ENCODE measurements at regions of chr16 and their contacts with region 1.

Region 1: GRCh38 chr16:54929090-54930004 is 1.3 kb upstream of the IRX5 start:
- DNase-seq: peak; percentile 99 to 100
- H3K4me3 ChIP-seq: peak overlapping the region; percentile 69 to 80
- H3K27ac ChIP-seq: peak overlapping the region; percentile 94 to 96
- H3K4me1 ChIP-seq: peaks cover 0 to 53% (median 19%) of the 10 kb centered on the region in 4 donors
- H3K27me3 ChIP-seq: no peaks in the 10 kb centered on the region
- CTCF ChIP-seq: no peak

Region 2: GRCh38 chr16:54193665-54194333 is 735.5 kb before region 1 on chr16:
- intact Hi-C with region 1: loop called (anchors 5 kb)
- DNase-seq: peak; percentile 79 to 89
- H3K4me3 ChIP-seq: peak overlapping the region; percentile 42 to 57
- H3K27ac ChIP-seq: peak overlapping the region; percentile 86 to 89
- H3K4me1 ChIP-seq: peaks cover 0 to 18% (median 15%) of the 10 kb centered on the region in 4 donors
- H3K27me3 ChIP-seq: no peaks in the 10 kb centered on the region
- CTCF ChIP-seq: peak; percentile 88 to 90

Region 3: GRCh38 chr16:54286090-54286993 is 643.0 kb before region 1 on chr16 and contains the start of gene IRX3:
- intact Hi-C with region 1: loop called (anchors 5 kb)
- DNase-seq: peak; percentile 87 to 93
- H3K4me3 ChIP-seq: peak within 1 kb of the TSS; percentile 66 to 91
- H3K27ac ChIP-seq: peak within 1 kb of the TSS; percentile 77 to 91
- H3K4me1 ChIP-seq: peaks cover 0 to 48% (median 34%) of the 10 kb centered on the region in 4 donors
- H3K27me3 ChIP-seq: peaks cover 0 to 16% of the 10 kb centered on the region in 2 donors
- CTCF ChIP-seq: no peak

Region 4: GRCh38 chr16:54647725-54648221 is 281.6 kb before region 1 on chr16:
- intact Hi-C with region 1: loop called (anchors 5 kb)
- DNase-seq: no peak
- H3K4me3 ChIP-seq: no peak overlapping the region
- H3K27ac ChIP-seq: peak overlapping the region; percentile 22 to 43
- H3K4me1 ChIP-seq: peaks cover 0 to 68% (median 33%) of the 10 kb centered on the region in 4 donors
- H3K27me3 ChIP-seq: no peaks in the 10 kb centered on the region
- CTCF ChIP-seq: no peak

Region 5: DNA sequence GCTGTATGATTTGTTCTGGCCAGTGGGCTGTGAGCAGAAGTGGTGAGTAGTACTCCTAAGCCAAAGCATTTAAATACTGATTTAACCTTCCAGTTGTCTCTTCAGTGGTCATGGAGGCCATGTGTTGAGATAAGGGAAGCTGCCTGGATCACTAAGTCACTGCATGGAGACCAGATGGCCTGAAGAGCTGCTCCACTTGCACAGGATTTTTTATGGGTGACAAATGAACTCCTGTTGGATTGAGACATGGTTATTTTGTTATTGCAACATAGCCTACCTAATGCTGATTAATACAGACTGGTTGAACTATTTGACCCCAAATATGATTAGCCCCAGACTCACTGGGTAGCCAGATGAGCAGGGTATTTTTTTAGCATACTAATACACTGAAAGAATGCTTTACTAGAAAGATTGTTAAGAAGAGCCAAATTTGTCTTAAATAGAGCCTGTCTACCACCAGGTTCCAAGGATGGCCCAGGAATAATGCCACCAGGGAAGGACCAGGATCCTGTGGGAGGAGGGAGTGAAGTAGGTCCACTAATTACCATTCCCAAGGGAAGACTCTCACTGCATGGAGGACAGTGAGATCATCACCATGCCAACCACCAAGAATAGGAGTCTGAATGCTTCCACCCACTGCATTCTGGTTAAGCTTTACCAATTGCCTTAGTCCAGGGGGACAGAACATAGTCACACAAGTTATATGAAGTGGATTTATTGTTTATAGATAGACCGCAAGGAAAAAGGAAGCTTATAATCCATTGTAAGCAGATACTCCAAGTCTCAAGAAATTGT is 207.2 kb after region 1 on chr16:
- intact Hi-C with region 1: no loop called
- DNase-seq: no peak
- H3K4me3 ChIP-seq: no peak overlapping the region
- H3K27ac ChIP-seq: no peak overlapping the region
- H3K4me1 ChIP-seq: no peaks in the 10 kb centered on the region
- H3K27me3 ChIP-seq: no peaks in the 10 kb centered on the region
- CTCF ChIP-seq: no peak

Region 6: GRCh38 chr16:55643161-55643970 is 714.0 kb after region 1 on chr16:
- intact Hi-C with region 1: no loop called
- DNase-seq: no peak
- H3K4me3 ChIP-seq: no peak overlapping the region
- H3K27ac ChIP-seq: no peak overlapping the region
- H3K4me1 ChIP-seq: no peaks in the 10 kb centered on the region
- H3K27me3 ChIP-seq: peaks cover 0 to 4% of the 10 kb centered on the region in 2 donors
- CTCF ChIP-seq: no peak

Measured in tibial artery (tissue), 4 donors.